Heart left ventricle (tissue), 16 donors: ENCODE measurements at regions of chr3 and their contacts with region 1.

Region 1: GRCh38 chr3:71069797-71070196 is 513.7 kb downstream of the FOXP1 start:
- DNase-seq: peak in 4 of 5 donors; percentile 56 to 70 (median 67)
- ATAC-seq: peak; percentile 33 to 73 (median 57)
- H3K4me3 ChIP-seq: no peak overlapping the region
- H3K27ac ChIP-seq: peak overlapping the region in 3 of 12 donors; percentile 24 to 97 (median 25)
- H3K4me1 ChIP-seq: peaks cover 5 to 67% (median 41%) of the 10 kb centered on the region in 12 donors
- H3K27me3 ChIP-seq: no peaks in the 10 kb centered on the region
- CTCF ChIP-seq: peak; percentile 28 to 75 (median 58)
- POLR2A ChIP-seq: no peak

Region 2: GRCh38 chr3:70539908-70540307 is 529.9 kb before region 1 on chr3:
- intact Hi-C with region 1: loop called in 1 of 10 experiments (anchors 10 kb)
- DNase-seq: no peak
- ATAC-seq: no peak
- H3K4me3 ChIP-seq: no peak overlapping the region
- H3K27ac ChIP-seq: no peak overlapping the region
- H3K4me1 ChIP-seq: no peaks in the 10 kb centered on the region
- H3K27me3 ChIP-seq: peaks cover 0 to 13% (median 0%) of the 10 kb centered on the region in 9 donors
- CTCF ChIP-seq: peak in 2 of 12 donors; percentile 9 to 10
- POLR2A ChIP-seq: no peak

Region 3: DNA sequence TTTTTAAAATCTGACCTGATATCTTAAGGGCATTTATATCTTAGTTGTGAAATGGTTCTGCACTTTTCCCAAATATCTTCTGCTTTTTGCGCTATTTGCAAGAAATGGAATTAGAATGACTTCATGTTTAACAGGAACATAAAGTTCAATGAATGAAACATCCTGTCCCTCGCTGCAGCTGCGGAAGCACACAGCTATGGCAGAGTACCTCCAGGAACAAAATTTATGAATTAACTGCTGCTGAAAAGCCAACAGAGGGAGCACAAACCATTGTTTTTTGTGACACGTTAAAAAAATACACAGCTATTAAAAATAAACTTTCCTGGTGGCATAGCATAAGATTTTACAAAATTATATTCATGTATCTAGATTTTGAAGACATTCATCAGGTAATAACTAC is 353.0 kb before region 1 on chr3:
- intact Hi-C with region 1: loop called in 6 of 10 experiments (anchors 5 to 10 kb)
- DNase-seq: peak in 3 of 5 donors; percentile 15 to 34 (median 33)
- ATAC-seq: peak in 3 of 4 donors; percentile 62 to 78 (median 70)
- H3K4me3 ChIP-seq: no peak overlapping the region
- H3K27ac ChIP-seq: no peak overlapping the region
- H3K4me1 ChIP-seq: peaks cover 0 to 7% (median 0%) of the 10 kb centered on the region in 12 donors
- H3K27me3 ChIP-seq: no peaks in the 10 kb centered on the region
- CTCF ChIP-seq: peak; percentile 32 to 74 (median 52)
- POLR2A ChIP-seq: no peak

Region 4: DNA sequence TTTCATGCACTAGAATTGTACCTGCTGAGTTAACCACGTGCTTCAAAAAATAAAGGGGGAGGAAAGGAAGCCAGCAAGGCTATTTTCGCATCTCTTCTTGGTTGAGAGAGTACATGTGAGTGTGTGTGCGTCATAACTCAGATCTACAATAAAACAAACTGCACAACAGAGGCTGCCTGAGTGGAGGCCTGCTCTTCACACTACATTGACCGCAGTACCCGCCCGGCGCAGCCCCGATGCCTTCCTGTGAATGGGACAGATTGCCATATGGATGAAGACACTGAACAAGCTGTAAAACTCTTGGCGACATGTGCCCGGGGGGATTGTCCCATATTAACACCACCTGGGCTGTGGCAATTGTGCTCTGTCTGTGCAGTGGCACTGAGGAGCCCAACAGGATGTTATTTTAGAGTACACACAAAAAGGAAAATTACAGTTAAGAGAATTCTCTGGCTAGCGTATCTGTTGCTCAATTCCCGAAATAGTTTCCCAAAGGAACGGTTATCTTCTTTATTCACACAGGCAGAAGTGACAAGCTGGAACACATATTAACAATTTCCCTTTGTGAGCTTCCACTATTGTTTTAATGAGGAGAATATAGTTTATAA is 37.8 kb before region 1 on chr3:
- intact Hi-C with region 1: loop called in 1 of 10 experiments (anchors 5 kb)
- DNase-seq: peak in 3 of 5 donors; percentile 21 to 59 (median 30)
- ATAC-seq: peak in 3 of 4 donors; percentile 63 to 70 (median 65)
- H3K4me3 ChIP-seq: peak overlapping the region in 1 of 12 donors; percentile 3
- H3K27ac ChIP-seq: peak overlapping the region; percentile 6 to 70 (median 61)
- H3K4me1 ChIP-seq: peaks cover 9 to 81% (median 45%) of the 10 kb centered on the region in 12 donors
- H3K27me3 ChIP-seq: no peaks in the 10 kb centered on the region
- CTCF ChIP-seq: no peak
- POLR2A ChIP-seq: no peak

Region 5: DNA sequence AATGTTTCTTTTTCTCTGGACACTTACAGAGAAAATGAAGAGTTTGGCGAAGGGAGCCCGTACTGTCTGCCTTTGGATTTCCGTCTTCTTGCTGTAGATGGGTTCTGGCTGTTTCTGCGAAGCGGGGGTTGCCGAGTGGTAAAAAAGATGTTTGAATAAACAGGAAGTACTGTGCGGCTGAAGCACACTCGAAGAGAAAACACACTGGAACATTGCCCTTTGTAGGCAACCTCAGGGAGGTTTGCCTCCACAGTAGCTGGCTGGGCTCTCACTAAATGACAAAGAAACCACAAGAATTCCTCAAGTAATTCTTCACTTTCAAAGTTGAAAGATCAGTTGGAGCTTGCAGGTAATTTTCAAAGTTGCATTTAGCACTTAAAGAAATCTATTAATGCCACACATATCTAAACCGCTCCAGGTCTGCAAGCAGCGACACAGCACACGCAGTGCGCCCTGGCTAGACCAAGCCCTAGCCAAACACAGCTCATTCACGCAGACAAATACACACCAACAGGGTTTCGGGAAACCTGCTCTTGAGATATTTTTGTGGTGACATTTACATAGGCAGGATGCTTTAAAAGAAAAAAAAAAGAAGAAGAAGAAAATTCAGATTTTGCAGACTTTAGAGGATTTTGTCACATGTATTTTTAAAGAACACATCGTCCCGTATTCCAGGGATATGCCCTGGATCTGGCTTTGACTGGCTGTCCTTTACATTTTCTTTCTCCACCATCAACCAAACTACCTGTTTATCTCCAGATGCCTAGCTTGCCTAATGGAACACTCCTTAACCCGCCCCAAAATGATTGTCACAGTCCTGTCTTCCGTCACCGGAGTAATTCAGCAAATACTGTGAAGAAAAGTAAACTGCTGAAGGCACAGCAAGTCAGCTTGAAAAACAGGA is 60.9 kb after region 1 on chr3:
- intact Hi-C with region 1: loop called in 6 of 10 experiments (anchors 2 to 5 kb)
- DNase-seq: peak; percentile 60 to 74 (median 70)
- ATAC-seq: peak; percentile 59 to 76 (median 70)
- H3K4me3 ChIP-seq: peak overlapping the region; percentile 36 to 67 (median 55)
- H3K27ac ChIP-seq: peak overlapping the region; percentile 78 to 94 (median 88)
- H3K4me1 ChIP-seq: peaks cover 3 to 80% (median 54%) of the 10 kb centered on the region in 12 donors
- H3K27me3 ChIP-seq: no peaks in the 10 kb centered on the region
- CTCF ChIP-seq: no peak
- POLR2A ChIP-seq: peak in 1 of 2 donors; percentile 43

Region 6: GRCh38 chr3:71305231-71306206 is 235.7 kb after region 1 on chr3:
- intact Hi-C with region 1: loop called in 4 of 10 experiments (anchors 5 to 10 kb)
- DNase-seq: peak in 4 of 5 donors; percentile 37 to 49 (median 45)
- ATAC-seq: peak; percentile 82 to 94 (median 86)
- H3K4me3 ChIP-seq: peak overlapping the region in 11 of 12 donors; percentile 2 to 51 (median 45)
- H3K27ac ChIP-seq: peak overlapping the region; percentile 45 to 82 (median 72)
- H3K4me1 ChIP-seq: peaks cover 0 to 48% (median 26%) of the 10 kb centered on the region in 12 donors
- H3K27me3 ChIP-seq: no peaks in the 10 kb centered on the region
- CTCF ChIP-seq: no peak
- POLR2A ChIP-seq: no peak